ENCODE measurements at regions of chr9 and their contacts with region 1.

Region 1: DNA sequence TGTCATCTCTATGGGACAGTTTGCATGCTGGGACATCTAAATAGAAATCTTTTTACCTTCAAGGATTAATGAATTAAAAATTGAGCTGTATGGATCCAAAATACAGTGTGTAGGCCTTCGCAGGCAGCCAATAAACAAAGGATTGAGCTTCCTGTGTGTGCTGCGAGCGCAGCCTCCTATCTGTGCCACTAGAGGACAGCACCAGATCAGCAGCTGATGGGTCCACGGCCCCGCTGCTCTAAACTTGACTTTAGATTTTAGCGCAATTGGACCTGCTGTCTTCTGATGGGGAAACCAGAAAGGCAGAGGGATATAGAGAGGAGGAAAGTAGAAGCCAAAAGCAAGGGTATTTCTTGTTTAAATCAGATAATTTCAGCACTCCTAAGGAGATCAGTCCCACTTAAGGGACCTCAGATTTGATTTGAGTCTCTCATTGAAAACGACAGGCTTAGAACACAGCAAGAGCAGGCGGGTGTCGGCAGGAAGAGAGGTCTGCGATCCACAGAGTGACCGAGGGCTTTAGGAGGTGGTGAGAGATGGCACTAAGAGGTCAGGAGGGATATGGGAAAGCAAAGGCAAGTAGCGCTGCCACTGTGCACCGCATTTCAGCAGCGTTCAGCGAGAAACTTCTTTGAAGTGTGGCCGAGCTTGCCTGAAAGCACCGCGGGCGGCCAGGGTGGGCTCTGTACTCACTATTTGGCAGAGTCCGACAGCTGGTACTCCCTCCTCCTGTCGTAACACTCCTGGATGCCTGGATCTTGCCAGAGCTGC is 214.3 kb downstream of the GNA14 start:
- DNase-seq: no peak
- ATAC-seq: peak; percentile 95
- H3K4me3 ChIP-seq: peak overlapping the region in 1 of 2 experiments; percentile 26; a peak in 2 of 4 replicates
- H3K27ac ChIP-seq: no peak overlapping the region
- H3K4me1 ChIP-seq: no peaks in the 10 kb centered on the region
- H3K27me3 ChIP-seq: no peaks in the 10 kb centered on the region
- CTCF ChIP-seq: peak; percentile 97

Region 2: GRCh38 chr9:77456829-77457437 is 23.1 kb after region 1 on chr9:
- CTCF ChIA-PET with region 1: interaction called, 11 read pairs
- POLR2A ChIA-PET with region 1: no interaction called
- in situ Hi-C with region 1: no loop called
- intact Hi-C with region 1: no loop called
- DNase-seq: peak; percentile 77
- ATAC-seq: peak; percentile 78
- H3K4me3 ChIP-seq: no peak overlapping the region
- H3K27ac ChIP-seq: no peak overlapping the region
- H3K4me1 ChIP-seq: no peaks in the 10 kb centered on the region
- H3K27me3 ChIP-seq: no peaks in the 10 kb centered on the region
- CTCF ChIP-seq: peak; percentile 85

Region 3: DNA sequence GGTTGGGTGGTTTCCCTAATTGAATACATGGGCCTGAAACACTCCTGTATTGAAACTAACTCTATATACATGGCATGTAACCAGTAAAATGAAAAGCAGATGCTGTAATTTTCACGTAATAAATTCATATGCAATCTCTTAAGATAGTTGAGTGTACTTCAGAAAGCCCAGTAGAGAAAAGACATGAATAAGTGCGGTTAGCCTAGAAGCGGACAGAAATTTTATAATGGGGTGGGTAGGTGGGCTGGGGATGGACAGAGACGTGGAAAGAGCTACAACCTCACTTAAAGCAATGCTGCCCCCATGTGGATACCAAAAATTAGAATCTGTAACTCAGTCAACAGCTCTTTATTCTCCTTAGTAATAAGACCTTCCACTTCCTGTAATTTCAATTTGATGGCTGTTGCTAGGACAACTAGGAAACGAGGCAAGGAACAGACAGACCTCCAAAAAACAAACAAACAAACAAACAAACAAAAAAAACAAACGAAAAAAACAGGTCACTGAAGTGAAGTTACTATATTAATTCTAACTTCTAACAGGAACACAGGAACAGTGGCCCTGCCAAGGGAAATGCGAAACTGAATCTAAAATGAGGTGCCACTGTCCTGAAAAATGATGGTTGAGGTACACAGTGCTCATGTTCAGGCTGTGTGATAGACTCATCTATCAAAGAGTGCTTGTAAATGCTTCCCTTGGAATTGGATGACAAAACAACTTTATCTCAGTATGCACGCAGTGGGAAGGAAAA is 317.7 kb after region 1 on chr9:
- CTCF ChIA-PET with region 1: interaction called, 3 read pairs
- POLR2A ChIA-PET with region 1: no interaction called
- in situ Hi-C with region 1: no loop called
- intact Hi-C with region 1: loop called (anchors 5 kb)
- DNase-seq: no peak
- ATAC-seq: peak; percentile 66; the same call in 1 of the 2 replicates
- H3K4me3 ChIP-seq: no peak overlapping the region
- H3K27ac ChIP-seq: no peak overlapping the region
- H3K4me1 ChIP-seq: no peaks in the 10 kb centered on the region
- H3K27me3 ChIP-seq: no peaks in the 10 kb centered on the region
- CTCF ChIP-seq: peak; percentile 61

Measured in Panc1 (cell line).